GM12878 (cell line): ENCODE measurements at regions of chr2 and their contacts with region 1.

Region 1: GRCh38 chr2:111209045-111209514 is 88.4 kb downstream of the BCL2L11 start:
- DNase-seq: peak; percentile 97
- ATAC-seq: peak; percentile 95
- H3K4me3 ChIP-seq: no peak overlapping the region
- H3K27ac ChIP-seq: no peak overlapping the region
- H3K4me1 ChIP-seq: peaks cover 7% of the 10 kb centered on the region
- H3K27me3 ChIP-seq: no peaks in the 10 kb centered on the region
- CTCF ChIP-seq: no peak
- EP300 ChIP-seq: peak; percentile 95 to 97
- POLR2A ChIP-seq: no peak
- RAD21 ChIP-seq: 0 out of 2 replicates have a peak, but pooled peaks have one; percentile 1

Region 2: GRCh38 chr2:110853507-110853906 is 355.6 kb before region 1 on chr2:
- CTCF ChIA-PET with region 1: no interaction called
- POLR2A ChIA-PET with region 1: no interaction called
- RAD21 ChIA-PET with region 1: no interaction called
- SMC1A ChIA-PET with region 1: no interaction called
- in situ Hi-C with region 1: loop called (anchors 25 kb)
- intact Hi-C with region 1: no loop called
- DNase-seq: no peak
- ATAC-seq: peak; percentile 79
- H3K4me3 ChIP-seq: no peak overlapping the region
- H3K27ac ChIP-seq: no peak overlapping the region
- H3K4me1 ChIP-seq: peaks cover 7% of the 10 kb centered on the region; the same call in 1 of the 2 replicates
- H3K27me3 ChIP-seq: no peaks in the 10 kb centered on the region; a peak in 1 of 4 replicates
- CTCF ChIP-seq: peak; percentile 62 to 76 (median 63)
- EP300 ChIP-seq: no peak
- POLR2A ChIP-seq: no peak
- RAD21 ChIP-seq: peak; percentile 66

Region 3: DNA sequence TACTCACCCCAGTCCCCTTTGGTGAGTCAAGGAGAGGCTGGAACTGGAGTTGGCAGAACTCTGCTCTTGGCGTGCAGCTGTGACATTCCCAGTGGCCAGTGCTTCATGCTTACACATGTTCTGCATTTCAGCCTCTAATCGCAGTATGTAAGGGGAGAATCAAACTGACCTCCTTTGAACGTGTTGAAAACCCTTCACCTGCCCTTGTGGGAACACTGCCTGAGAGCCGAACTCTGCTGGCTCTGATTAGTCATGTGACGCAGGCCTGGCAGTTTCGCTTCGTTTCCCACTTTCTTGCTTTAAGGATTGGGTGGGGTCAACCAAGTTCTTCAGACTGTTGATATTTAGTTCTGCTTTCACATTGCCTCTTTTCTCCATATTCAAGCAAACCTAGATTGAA is 262.2 kb before region 1 on chr2:
- CTCF ChIA-PET with region 1: no interaction called
- POLR2A ChIA-PET with region 1: no interaction called
- RAD21 ChIA-PET with region 1: no interaction called
- SMC1A ChIA-PET with region 1: no interaction called
- in situ Hi-C with region 1: no loop called
- intact Hi-C with region 1: no loop called
- DNase-seq: no peak
- ATAC-seq: no peak
- H3K4me3 ChIP-seq: no peak overlapping the region
- H3K27ac ChIP-seq: no peak overlapping the region
- H3K4me1 ChIP-seq: no peaks in the 10 kb centered on the region
- H3K27me3 ChIP-seq: no peaks in the 10 kb centered on the region; a peak in 1 of 4 replicates
- CTCF ChIP-seq: no peak
- EP300 ChIP-seq: no peak
- POLR2A ChIP-seq: no peak
- RAD21 ChIP-seq: no peak

Region 4: DNA sequence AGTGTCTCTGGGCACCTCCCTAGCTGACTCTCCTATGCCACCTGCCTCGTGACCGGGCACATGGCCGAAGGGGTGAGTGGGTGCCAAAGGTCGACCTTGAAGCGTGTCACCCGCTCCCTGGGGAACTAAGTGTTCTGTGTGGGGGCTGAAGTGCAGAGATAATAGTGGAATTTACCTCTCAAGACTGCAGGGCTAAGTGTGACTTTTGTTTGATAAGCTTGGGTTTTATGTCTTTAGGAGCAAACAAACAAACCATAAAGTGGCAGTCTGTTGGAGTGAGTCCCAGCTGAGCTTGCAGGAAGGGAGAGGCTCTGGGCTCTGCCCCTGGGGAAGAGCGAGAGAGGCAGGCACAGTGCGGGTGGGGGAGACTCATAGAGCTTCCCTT is 23.4 kb before region 1 on chr2:
- CTCF ChIA-PET with region 1: interaction called, 3 read pairs
- POLR2A ChIA-PET with region 1: interaction called, 3 read pairs
- RAD21 ChIA-PET with region 1: interaction called, 27 read pairs
- SMC1A ChIA-PET with region 1: interaction called, 70 read pairs
- in situ Hi-C with region 1: no loop called
- intact Hi-C with region 1: no loop called
- DNase-seq: no peak
- ATAC-seq: peak; percentile 62
- H3K4me3 ChIP-seq: no peak overlapping the region
- H3K27ac ChIP-seq: no peak overlapping the region
- H3K4me1 ChIP-seq: no peaks in the 10 kb centered on the region
- H3K27me3 ChIP-seq: peaks cover 0 to 22% of the 10 kb centered on the region in 2 experiments; a peak in 2 of 4 replicates
- CTCF ChIP-seq: no peak
- EP300 ChIP-seq: no peak
- POLR2A ChIP-seq: no peak
- RAD21 ChIP-seq: no peak

Region 5: DNA sequence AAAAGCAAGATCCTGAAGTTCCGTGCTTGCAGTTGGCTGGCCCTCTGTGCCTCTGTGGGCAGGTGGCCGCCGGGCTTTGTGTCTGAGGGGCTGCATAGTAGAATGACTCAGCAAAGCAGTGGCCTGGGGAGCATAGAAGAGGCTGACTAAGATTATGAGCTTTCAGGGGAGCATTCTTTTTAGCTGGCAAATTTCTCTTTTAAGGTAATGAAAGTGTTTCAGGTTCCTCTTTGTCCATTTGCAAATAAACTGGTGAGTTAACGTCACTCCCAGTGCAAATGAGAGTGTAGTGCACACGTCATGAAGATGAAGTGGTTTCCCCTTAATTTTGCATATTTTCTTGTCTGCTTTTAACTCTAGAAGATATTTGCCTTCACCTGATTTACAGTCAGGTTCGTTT is 10.2 kb after region 1 on chr2:
- CTCF ChIA-PET with region 1: interaction called, 17 read pairs
- POLR2A ChIA-PET with region 1: interaction called, 15 read pairs
- RAD21 ChIA-PET with region 1: interaction called, 52 read pairs
- SMC1A ChIA-PET with region 1: interaction called, 60 read pairs
- in situ Hi-C with region 1: no loop called
- intact Hi-C with region 1: loop called (anchors 1 kb)
- DNase-seq: peak; percentile 98
- ATAC-seq: peak; percentile 96
- H3K4me3 ChIP-seq: peak overlapping the region; percentile 15; the same call in 1 of the 2 replicates
- H3K27ac ChIP-seq: peak overlapping the region; percentile 74
- H3K4me1 ChIP-seq: peaks cover 17% of the 10 kb centered on the region
- H3K27me3 ChIP-seq: no peaks in the 10 kb centered on the region
- CTCF ChIP-seq: no peak
- EP300 ChIP-seq: peak; percentile 99 to 100
- POLR2A ChIP-seq: no peak
- RAD21 ChIP-seq: 0 out of 2 replicates have a peak, but pooled peaks have one; percentile 0

Region 6: GRCh38 chr2:111239107-111239506 is 30.0 kb after region 1 on chr2:
- CTCF ChIA-PET with region 1: interaction called, 3 read pairs
- POLR2A ChIA-PET with region 1: interaction called, 4 read pairs
- RAD21 ChIA-PET with region 1: interaction called, 7 read pairs
- SMC1A ChIA-PET with region 1: interaction called, 13 read pairs
- in situ Hi-C with region 1: no loop called
- intact Hi-C with region 1: loop called (anchors 2 kb)
- DNase-seq: no peak
- ATAC-seq: peak; percentile 100
- H3K4me3 ChIP-seq: no peak overlapping the region
- H3K27ac ChIP-seq: no peak overlapping the region
- H3K4me1 ChIP-seq: peaks cover 9% of the 10 kb centered on the region
- H3K27me3 ChIP-seq: no peaks in the 10 kb centered on the region
- CTCF ChIP-seq: no peak
- EP300 ChIP-seq: peak in 1 of 2 experiments; percentile 57; a peak in 1 of 4 replicates
- POLR2A ChIP-seq: no peak
- RAD21 ChIP-seq: no peak

Region 7: GRCh38 chr2:112150447-112150846 is 941.4 kb after region 1 on chr2:
- CTCF ChIA-PET with region 1: no interaction called
- POLR2A ChIA-PET with region 1: no interaction called
- RAD21 ChIA-PET with region 1: no interaction called
- SMC1A ChIA-PET with region 1: no interaction called
- in situ Hi-C with region 1: no loop called
- intact Hi-C with region 1: no loop called
- DNase-seq: no peak
- ATAC-seq: no peak
- H3K4me3 ChIP-seq: no peak overlapping the region
- H3K27ac ChIP-seq: no peak overlapping the region
- H3K4me1 ChIP-seq: no peaks in the 10 kb centered on the region
- H3K27me3 ChIP-seq: no peaks in the 10 kb centered on the region; a peak in 1 of 4 replicates
- CTCF ChIP-seq: no peak
- EP300 ChIP-seq: no peak
- POLR2A ChIP-seq: no peak
- RAD21 ChIP-seq: no peak